ENCODE measurements at regions of chr2 and their contacts with region 1.

Region 1: DNA sequence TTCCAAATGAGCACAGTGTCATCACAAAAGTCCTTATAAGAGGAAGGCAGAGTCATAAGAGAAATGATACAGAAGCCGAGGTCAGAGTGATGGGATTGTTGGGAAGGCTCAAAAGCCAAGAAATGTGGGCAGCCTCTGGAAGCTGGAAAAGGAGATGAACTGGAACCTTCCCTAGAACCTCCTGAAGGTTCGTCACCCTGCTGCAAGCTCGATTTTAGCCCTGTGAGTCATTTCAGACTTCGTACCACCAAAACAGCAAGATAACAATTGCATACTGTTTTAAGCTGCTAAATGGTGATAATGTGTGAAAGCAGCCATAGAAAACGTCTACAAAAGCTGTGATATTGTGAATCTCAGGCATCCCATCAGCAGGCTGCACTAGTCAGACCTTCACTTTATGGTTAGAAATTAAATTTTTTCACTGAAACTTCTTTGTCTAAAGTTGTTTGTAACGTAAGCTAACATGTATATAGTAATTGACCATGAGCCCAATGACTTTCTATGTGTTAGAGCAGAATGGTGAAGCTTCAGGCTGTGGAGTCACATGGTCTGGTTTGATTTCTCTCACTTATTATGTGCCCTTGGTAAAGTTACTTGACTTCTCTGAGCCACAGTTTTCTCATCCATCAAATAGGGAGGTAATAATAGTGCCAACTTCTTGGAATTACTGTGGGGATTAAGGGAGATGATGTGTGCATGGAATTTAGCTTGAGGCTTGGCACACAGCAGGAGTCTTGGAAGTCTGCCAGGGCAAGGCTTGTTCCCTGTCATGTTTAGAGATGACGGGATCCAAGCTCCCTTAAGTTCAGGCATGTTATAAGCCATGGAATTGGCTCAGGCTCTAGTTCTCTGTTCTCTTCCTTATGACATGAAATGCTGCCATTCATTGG is 132.0 kb upstream of the CCDC195 start:
- DNase-seq: peak; percentile 27
- ATAC-seq: peak in 1 of 2 donors; percentile 58

Region 2: DNA sequence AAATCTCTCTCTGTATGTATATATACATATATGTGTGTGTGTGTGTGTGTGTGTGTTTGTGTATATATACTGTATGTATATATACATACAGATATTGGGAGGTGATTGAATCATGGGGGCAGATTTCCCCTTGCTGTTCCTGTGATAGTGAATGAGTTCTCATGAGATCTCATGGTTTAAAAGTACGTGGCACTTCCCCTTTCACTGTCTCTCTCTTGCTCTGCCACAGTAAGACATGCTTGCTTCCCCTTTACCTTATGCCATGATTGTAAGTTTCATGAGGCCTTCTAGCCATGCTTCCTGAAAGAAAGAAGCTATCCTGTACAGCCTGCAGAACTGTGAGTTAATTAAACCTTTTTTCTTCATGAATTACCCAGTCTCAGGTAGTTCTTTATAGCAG is 113.3 kb before region 1 on chr2:
- intact Hi-C with region 1: no loop called
- DNase-seq: no peak
- ATAC-seq: no peak

Region 3: GRCh38 chr2:224869601-224870233 is 21.5 kb after region 1 on chr2:
- intact Hi-C with region 1: no loop called
- DNase-seq: no peak
- ATAC-seq: no peak

Region 4: GRCh38 chr2:224997802-224998201 is 149.6 kb after region 1 on chr2:
- intact Hi-C with region 1: loop called in 1 of 2 experiments (anchors 10 kb)
- DNase-seq: no peak
- ATAC-seq: peak; percentile 34 to 55